H1 (cell line): ENCODE measurements at regions of chr13 and their contacts with region 1.

Region 1: DNA sequence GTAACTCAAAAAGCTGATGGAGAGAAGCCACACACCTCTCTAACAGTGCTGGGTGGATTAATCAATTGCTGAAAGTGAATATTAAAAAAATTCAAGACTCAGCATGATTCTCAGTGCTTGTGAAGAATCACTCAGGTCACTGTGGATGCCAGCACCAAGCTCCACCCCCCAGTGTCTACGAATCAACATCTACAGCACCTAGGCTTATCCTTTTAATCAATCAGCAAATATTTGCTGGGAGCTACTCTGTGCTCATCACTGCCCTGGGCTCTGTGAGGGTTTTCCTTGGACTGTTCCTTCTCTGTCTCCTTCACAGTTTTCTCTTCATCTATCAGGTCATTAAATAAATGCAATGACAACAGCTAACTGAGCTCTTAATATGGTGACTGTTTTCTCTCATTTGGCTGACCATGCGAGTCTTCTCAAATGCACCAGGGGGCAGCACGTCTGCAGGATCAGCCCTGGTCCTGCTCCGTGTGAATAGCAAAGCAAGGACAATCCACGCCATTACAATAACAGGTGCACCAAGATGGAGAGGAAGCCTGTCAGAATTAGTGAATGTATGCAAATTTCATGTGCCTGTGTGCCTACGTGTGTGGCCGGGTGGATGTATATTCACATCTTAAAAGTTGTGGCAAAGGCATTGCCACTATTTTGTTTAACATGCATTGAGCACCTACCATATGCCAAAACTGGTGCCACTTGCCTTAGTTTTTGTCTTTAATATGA is 14.6 kb upstream of the C13orf42 start:
- DNase-seq: peak; percentile 43 to 77
- H3K4me3 ChIP-seq: no peak overlapping the region
- H3K27ac ChIP-seq: no peak overlapping the region
- H3K4me1 ChIP-seq: peaks cover 0 to 19% (median 6%) of the 10 kb centered on the region in 4 experiments; a peak in 5 of 7 replicates
- H3K27me3 ChIP-seq: no peaks in the 10 kb centered on the region
- CTCF ChIP-seq: peak; percentile 85 to 96 (median 89)
- EP300 ChIP-seq: no peak
- POLR2A ChIP-seq: no peak
- RAD21 ChIP-seq: peak; percentile 94 to 95

Region 2: GRCh38 chr13:50810998-50811397 is 314.7 kb before region 1 on chr13:
- CTCF ChIA-PET with region 1: no interaction called
- POLR2A ChIA-PET with region 1: no interaction called
- DNase-seq: no peak
- H3K4me3 ChIP-seq: no peak overlapping the region
- H3K27ac ChIP-seq: no peak overlapping the region
- H3K4me1 ChIP-seq: no peaks in the 10 kb centered on the region
- H3K27me3 ChIP-seq: no peaks in the 10 kb centered on the region
- CTCF ChIP-seq: no peak
- EP300 ChIP-seq: no peak
- POLR2A ChIP-seq: no peak
- RAD21 ChIP-seq: no peak

Region 3: GRCh38 chr13:51105046-51105445 is 20.6 kb before region 1 on chr13:
- CTCF ChIA-PET with region 1: interaction called, 16 read pairs
- POLR2A ChIA-PET with region 1: no interaction called
- DNase-seq: no peak
- H3K4me3 ChIP-seq: no peak overlapping the region
- H3K27ac ChIP-seq: no peak overlapping the region
- H3K4me1 ChIP-seq: peaks cover 0 to 4% (median 0%) of the 10 kb centered on the region in 4 experiments; a peak in 2 of 7 replicates
- H3K27me3 ChIP-seq: no peaks in the 10 kb centered on the region
- CTCF ChIP-seq: no peak
- EP300 ChIP-seq: no peak
- POLR2A ChIP-seq: no peak
- RAD21 ChIP-seq: no peak

Region 4: DNA sequence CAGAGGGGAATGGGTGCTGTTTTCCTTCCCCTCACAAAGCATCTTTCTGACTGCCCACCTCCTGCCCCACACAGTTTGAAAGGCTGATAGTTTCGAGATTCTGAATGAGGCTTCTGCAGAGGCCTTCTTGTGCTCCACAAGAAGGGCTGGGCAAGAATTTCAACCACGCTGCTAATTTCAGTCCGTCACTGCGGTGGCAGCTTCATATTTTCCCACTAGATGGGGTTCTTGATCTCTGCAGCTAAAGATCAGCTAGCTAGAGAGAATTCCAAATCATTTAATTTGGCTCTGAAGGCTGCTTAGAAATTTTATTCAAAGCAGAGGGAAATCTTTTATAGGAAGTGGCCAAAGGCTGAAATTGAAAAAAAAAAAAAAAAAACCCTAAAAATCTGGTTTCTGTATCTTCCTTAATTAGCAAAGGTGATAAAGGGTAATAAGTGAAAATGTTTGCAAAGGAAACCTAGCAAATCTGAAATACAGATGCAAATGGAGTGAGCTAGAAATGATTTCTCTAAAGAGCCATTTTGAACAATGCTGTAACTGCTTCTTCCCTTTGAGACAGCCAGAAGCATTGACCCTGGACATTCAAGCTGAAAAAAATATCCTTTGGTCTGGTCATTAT is 23.4 kb after region 1 on chr13:
- CTCF ChIA-PET with region 1: interaction called, 102 read pairs
- POLR2A ChIA-PET with region 1: interaction called, 13 read pairs
- DNase-seq: peak in 1 of 2 experiments; percentile 66
- H3K4me3 ChIP-seq: peak overlapping the region in 2 of 4 experiments; percentile 4 to 23; a peak in 3 of 8 replicates
- H3K27ac ChIP-seq: peak overlapping the region; percentile 56
- H3K4me1 ChIP-seq: peaks cover 11 to 32% (median 26%) of the 10 kb centered on the region in 4 experiments
- H3K27me3 ChIP-seq: no peaks in the 10 kb centered on the region
- CTCF ChIP-seq: peak; percentile 32 to 80 (median 58); a peak in 3 of 4 replicates
- EP300 ChIP-seq: no peak
- POLR2A ChIP-seq: no peak
- RAD21 ChIP-seq: peak; percentile 87 to 90

Region 5: GRCh38 chr13:51175001-51175400 is 49.3 kb after region 1 on chr13:
- CTCF ChIA-PET with region 1: interaction called, 11 read pairs
- POLR2A ChIA-PET with region 1: interaction called, 59 read pairs
- DNase-seq: peak in 1 of 2 experiments; percentile 60
- H3K4me3 ChIP-seq: peak overlapping the region; percentile 9 to 46 (median 21); a peak in 7 of 8 replicates
- H3K27ac ChIP-seq: peak overlapping the region; percentile 61; the same call in 1 of the 2 replicates
- H3K4me1 ChIP-seq: peaks cover 7 to 11% (median 9%) of the 10 kb centered on the region in 4 experiments; a peak in 6 of 7 replicates
- H3K27me3 ChIP-seq: no peaks in the 10 kb centered on the region
- CTCF ChIP-seq: no peak
- EP300 ChIP-seq: no peak
- POLR2A ChIP-seq: no peak; a peak in 1 of 3 replicates
- RAD21 ChIP-seq: no peak; a peak in 1 of 4 replicates

Region 6: GRCh38 chr13:51222037-51222685 is 96.5 kb after region 1 on chr13 and contains the start of gene FAM124A:
- CTCF ChIA-PET with region 1: interaction called, 22 read pairs
- POLR2A ChIA-PET with region 1: no interaction called
- DNase-seq: peak in 1 of 2 experiments; percentile 80
- H3K4me3 ChIP-seq: peak within 1 kb of the TSS; percentile 80 to 96 (median 89)
- H3K27ac ChIP-seq: peak within 1 kb of the TSS; percentile 24; the same call in 1 of the 2 replicates
- H3K4me1 ChIP-seq: peaks cover 6 to 23% (median 22%) of the 10 kb centered on the region in 4 experiments
- H3K27me3 ChIP-seq: no peaks in the 10 kb centered on the region
- CTCF ChIP-seq: peak; percentile 10 to 71 (median 46); a peak in 3 of 4 replicates
- EP300 ChIP-seq: no peak
- POLR2A ChIP-seq: peak in 1 of 2 experiments; percentile 42; a peak in 2 of 3 replicates
- RAD21 ChIP-seq: peak in 1 of 2 experiments; percentile 43; a peak in 2 of 4 replicates
- total RNA-seq, gene FAM124A: 47.1 and 49.9 TPM in 2 replicates

Region 7: GRCh38 chr13:51297556-51297955 is 171.9 kb after region 1 on chr13:
- CTCF ChIA-PET with region 1: interaction called, 12 read pairs
- POLR2A ChIA-PET with region 1: no interaction called
- DNase-seq: no peak
- H3K4me3 ChIP-seq: no peak overlapping the region
- H3K27ac ChIP-seq: no peak overlapping the region
- H3K4me1 ChIP-seq: peaks cover 2 to 20% (median 14%) of the 10 kb centered on the region in 4 experiments
- H3K27me3 ChIP-seq: no peaks in the 10 kb centered on the region
- CTCF ChIP-seq: peak in 1 of 3 experiments; percentile 29; a peak in 1 of 4 replicates
- EP300 ChIP-seq: no peak
- POLR2A ChIP-seq: no peak
- RAD21 ChIP-seq: peak; percentile 13 to 44; a peak in 2 of 4 replicates

Region 8: DNA sequence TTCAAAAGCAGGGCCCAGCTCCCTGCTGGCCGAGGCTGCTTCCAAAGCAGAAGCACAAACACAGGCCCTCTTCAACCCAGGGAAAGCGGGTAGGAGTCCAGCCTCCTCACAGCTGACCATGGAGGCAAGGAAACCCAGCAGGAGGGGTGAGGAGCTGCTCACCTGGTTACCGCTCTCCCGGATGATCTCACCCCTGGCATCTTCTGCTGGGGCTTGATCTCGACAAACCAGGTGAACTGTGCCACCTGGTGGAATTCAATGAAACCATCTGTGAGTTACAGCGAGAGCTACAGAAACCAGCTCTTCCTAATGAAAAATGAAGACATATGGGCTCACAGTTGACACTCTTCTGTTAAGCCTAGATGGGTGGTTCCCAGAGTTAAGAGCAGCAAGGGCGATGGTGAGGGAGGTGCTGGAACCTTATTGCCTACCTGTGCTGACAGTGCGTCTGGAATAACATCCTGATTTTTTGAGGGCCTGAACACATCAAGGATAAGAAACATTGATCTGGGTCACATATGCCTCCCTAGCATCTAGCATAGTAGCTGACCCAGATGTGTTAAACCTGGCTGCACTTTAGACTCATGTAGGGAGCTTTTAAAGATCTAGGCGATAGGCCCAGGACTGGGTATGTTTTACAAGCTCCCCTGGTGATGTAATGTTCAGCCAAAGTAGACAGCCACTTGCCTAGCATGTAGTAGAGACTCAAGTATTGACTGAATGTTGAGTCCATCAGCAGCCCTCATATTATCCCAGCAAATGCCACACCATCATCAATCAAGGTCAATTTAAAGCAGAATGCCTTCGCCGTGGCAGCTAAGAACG is 672.2 kb after region 1 on chr13:
- CTCF ChIA-PET with region 1: interaction called, 15 read pairs
- POLR2A ChIA-PET with region 1: no interaction called
- DNase-seq: peak in 1 of 2 experiments; percentile 55
- H3K4me3 ChIP-seq: no peak overlapping the region
- H3K27ac ChIP-seq: no peak overlapping the region
- H3K4me1 ChIP-seq: peaks cover 4 to 18% (median 6%) of the 10 kb centered on the region in 4 experiments
- H3K27me3 ChIP-seq: no peaks in the 10 kb centered on the region
- CTCF ChIP-seq: peak; percentile 36 to 84 (median 63)
- EP300 ChIP-seq: no peak
- POLR2A ChIP-seq: no peak
- RAD21 ChIP-seq: peak; percentile 90 to 92